ENCODE measurements at regions of chr1 and their contacts with region 1.

Region 1: DNA sequence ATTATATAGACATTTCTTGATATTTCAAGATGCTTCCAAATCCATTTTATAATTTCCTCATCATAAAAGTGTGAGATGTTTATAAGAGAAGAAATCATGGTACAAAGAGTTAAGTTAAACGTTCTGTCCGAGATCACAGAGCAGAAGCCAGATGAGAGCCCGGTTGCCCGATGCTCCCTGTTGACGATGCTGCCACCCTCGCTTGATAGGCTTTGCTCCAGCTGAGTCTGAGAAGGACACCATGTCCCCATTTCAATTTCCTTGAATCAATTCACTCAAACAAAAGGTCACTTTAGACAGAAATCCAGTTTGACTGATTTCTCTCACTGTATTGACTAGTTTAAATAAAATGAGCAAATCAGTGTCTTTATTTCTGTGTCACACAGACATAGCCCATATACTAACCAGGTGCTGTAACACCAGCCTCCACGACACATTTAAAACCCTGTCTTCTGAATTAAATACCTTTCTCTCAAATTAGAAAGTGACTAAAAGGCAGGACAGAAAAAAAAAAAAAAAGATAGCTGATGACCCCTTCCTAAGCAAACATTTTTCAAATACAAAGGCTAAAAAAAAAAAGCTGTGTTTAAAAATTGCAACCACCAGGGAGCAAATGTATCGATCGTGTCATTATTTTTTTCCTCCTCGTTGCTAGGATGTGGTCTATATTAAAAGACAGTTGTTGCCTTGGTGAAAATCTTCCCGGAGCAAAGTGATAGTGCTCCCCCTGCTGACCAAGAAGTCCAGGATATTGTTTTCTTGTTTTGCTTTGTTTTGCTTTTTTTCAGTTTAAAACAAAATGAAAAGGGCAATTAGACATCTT is 35.2 kb downstream of the DNASE2B start:
- DNase-seq: peak in 7 of 9 donors; percentile 71 to 85 (median 79)
- ATAC-seq: peak; percentile 92
- H3K4me3 ChIP-seq: peak overlapping the region; percentile 34
- H3K4me3 Mint-ChIP-seq: peak overlapping the region in 9 of 10 donors; percentile 29 to 82 (median 77)
- H3K27ac ChIP-seq: peak overlapping the region; percentile 73
- H3K27ac Mint-ChIP-seq: peak overlapping the region in 2 of 9 donors; percentile 85 to 90
- H3K4me1 ChIP-seq: peaks cover 23 to 41% of the 10 kb centered on the region in 2 donors
- H3K4me1 Mint-ChIP-seq: peaks cover 0 to 12% (median 9%) of the 10 kb centered on the region in 7 donors
- H3K27me3 ChIP-seq: no peaks in the 10 kb centered on the region
- H3K27me3 Mint-ChIP-seq: no peaks in the 10 kb centered on the region

Region 2: DNA sequence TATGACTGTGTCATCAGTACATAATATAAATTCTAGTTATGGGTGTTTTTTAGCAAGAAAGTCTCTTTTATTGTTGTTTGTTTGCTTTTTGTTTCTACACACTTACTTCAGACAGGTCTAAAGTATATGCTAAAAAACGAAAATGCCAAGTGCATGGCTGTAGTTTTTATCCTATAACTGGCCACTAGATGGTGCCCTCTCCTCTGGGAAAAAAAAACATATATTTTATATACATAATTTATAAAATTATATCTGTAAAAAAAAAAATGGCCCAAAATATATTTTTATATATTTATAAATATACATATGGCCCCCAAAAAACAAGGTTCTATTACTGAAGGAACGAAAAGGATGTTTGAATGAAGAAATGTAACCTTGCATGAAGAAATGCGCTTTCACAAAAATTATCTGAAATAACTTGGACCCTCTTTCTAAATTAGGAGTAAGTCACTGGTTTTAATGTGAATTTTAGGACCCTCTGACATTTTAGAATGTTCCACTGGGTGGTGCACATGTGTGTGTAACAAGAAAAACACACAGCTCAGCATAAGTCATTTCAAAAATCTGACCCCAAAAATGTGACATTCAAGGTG is 528.1 kb before region 1 on chr1:
- CTCF ChIA-PET with region 1: no interaction called
- POLR2A ChIA-PET with region 1: no interaction called
- intact Hi-C with region 1: loop called (anchors 1 to 2 kb)
- DNase-seq: peak in 5 of 9 donors; percentile 16 to 34 (median 25)
- ATAC-seq: peak; percentile 53
- H3K4me3 ChIP-seq: no peak overlapping the region
- H3K4me3 Mint-ChIP-seq: no peak overlapping the region
- H3K27ac ChIP-seq: no peak overlapping the region
- H3K27ac Mint-ChIP-seq: no peak overlapping the region
- H3K4me1 ChIP-seq: no peaks in the 10 kb centered on the region
- H3K4me1 Mint-ChIP-seq: no peaks in the 10 kb centered on the region
- H3K27me3 ChIP-seq: no peaks in the 10 kb centered on the region
- H3K27me3 Mint-ChIP-seq: peaks cover 9 to 23% (median 20%) of the 10 kb centered on the region in 5 donors

Region 3: DNA sequence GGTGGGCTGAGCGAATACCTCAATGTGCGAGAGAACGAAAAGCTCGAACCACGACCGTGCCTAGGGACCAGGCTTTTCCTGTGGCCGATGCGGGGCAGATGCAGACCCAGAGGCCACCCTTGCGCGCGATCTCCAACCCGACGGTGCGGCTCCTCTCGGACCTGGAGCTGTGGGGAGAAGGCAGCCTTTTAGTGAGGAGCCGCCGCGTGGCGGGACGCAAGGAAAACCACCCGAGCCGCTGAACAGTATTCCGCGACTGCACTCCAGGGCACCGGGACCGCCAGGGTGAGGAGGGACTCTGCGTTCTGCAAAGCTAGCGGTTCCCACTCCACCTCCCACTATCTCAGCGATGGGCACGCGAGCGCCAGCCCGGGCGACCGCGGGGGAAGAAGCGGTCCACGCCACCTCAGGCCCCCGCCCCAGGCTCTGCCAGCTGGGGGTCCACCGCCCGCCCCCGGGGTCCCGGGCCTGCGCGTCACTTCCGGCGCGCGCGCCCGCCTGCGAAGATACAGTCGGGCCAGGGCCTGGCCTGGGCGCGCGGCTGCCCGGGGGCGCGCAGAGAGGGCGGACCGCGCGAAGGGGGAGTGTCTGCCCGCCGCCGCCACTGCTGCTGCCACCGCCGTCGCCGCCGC is 355.9 kb before region 1 on chr1:
- CTCF ChIA-PET with region 1: no interaction called
- POLR2A ChIA-PET with region 1: no interaction called
- intact Hi-C with region 1: loop called (anchors 2 to 5 kb)
- DNase-seq: peak; percentile 64 to 79 (median 72)
- ATAC-seq: peak; percentile 97
- H3K4me3 ChIP-seq: peak overlapping the region; percentile 79
- H3K4me3 Mint-ChIP-seq: peak overlapping the region; percentile 84 to 93 (median 90)
- H3K27ac ChIP-seq: peak overlapping the region; percentile 66
- H3K27ac Mint-ChIP-seq: peak overlapping the region; percentile 23 to 87 (median 75)
- H3K4me1 ChIP-seq: peaks cover 9 to 10% of the 10 kb centered on the region in 2 donors
- H3K4me1 Mint-ChIP-seq: peaks cover 6 to 23% (median 14%) of the 10 kb centered on the region in 7 donors
- H3K27me3 ChIP-seq: no peaks in the 10 kb centered on the region
- H3K27me3 Mint-ChIP-seq: peaks cover 0 to 35% (median 0%) of the 10 kb centered on the region in 5 donors

Region 4: GRCh38 chr1:84344286-84344685 is 89.2 kb before region 1 on chr1:
- CTCF ChIA-PET with region 1: no interaction called
- POLR2A ChIA-PET with region 1: no interaction called
- intact Hi-C with region 1: no loop called
- DNase-seq: no peak
- ATAC-seq: no peak
- H3K4me3 ChIP-seq: no peak overlapping the region
- H3K4me3 Mint-ChIP-seq: no peak overlapping the region
- H3K27ac ChIP-seq: no peak overlapping the region
- H3K27ac Mint-ChIP-seq: no peak overlapping the region
- H3K4me1 ChIP-seq: no peaks in the 10 kb centered on the region
- H3K4me1 Mint-ChIP-seq: no peaks in the 10 kb centered on the region
- H3K27me3 ChIP-seq: no peaks in the 10 kb centered on the region
- H3K27me3 Mint-ChIP-seq: peaks cover 0 to 5% (median 4%) of the 10 kb centered on the region in 5 donors

Region 5: GRCh38 chr1:84506002-84506728 is 72.7 kb after region 1 on chr1 and contains the starts of genes GNG5 and SPATA1:
- CTCF ChIA-PET with region 1: interaction called, 3 read pairs
- POLR2A ChIA-PET with region 1: interaction called, 4 read pairs
- intact Hi-C with region 1: loop called in 1 of 2 experiments (anchors 1 kb)
- DNase-seq: peak; percentile 94 to 98 (median 96)
- ATAC-seq: peak; percentile 95
- H3K4me3 ChIP-seq: peak within 1 kb of the TSS; percentile 94
- H3K4me3 Mint-ChIP-seq: peak within 1 kb of the TSS; percentile 94 to 100 (median 98)
- H3K27ac ChIP-seq: peak within 1 kb of the TSS; percentile 76
- H3K27ac Mint-ChIP-seq: peak within 1 kb of the TSS; percentile 93 to 99 (median 96)
- H3K4me1 ChIP-seq: peaks cover 15 to 27% of the 10 kb centered on the region in 2 donors
- H3K4me1 Mint-ChIP-seq: peaks cover 18 to 54% (median 50%) of the 10 kb centered on the region in 7 donors
- H3K27me3 ChIP-seq: no peaks in the 10 kb centered on the region
- H3K27me3 Mint-ChIP-seq: peaks cover 0 to 2% (median 0%) of the 10 kb centered on the region in 5 donors
- total RNA-seq, gene GNG5: 24.8 to 90.7 (median 28.9) TPM
- total RNA-seq, gene SPATA1: 1.7 to 3.6 (median 2.2) TPM in 4 of 5 experiments, not detected in the other

Region 6: GRCh38 chr1:84853741-84854721 is 420.6 kb after region 1 on chr1:
- CTCF ChIA-PET with region 1: no interaction called
- POLR2A ChIA-PET with region 1: no interaction called
- intact Hi-C with region 1: loop called in 1 of 2 experiments (anchors 10 kb)
- DNase-seq: peak in 8 of 9 donors; percentile 16 to 56 (median 41)
- ATAC-seq: peak; percentile 96
- H3K4me3 ChIP-seq: no peak overlapping the region
- H3K4me3 Mint-ChIP-seq: peak overlapping the region in 6 of 10 donors; percentile 0 to 70 (median 14)
- H3K27ac ChIP-seq: peak overlapping the region; percentile 5
- H3K27ac Mint-ChIP-seq: peak overlapping the region; percentile 54 to 98 (median 87)
- H3K4me1 ChIP-seq: peaks cover 14 to 17% of the 10 kb centered on the region in 2 donors
- H3K4me1 Mint-ChIP-seq: peaks cover 23 to 52% (median 45%) of the 10 kb centered on the region in 7 donors
- H3K27me3 ChIP-seq: no peaks in the 10 kb centered on the region
- H3K27me3 Mint-ChIP-seq: peaks cover 0 to 8% (median 0%) of the 10 kb centered on the region in 5 donors

Region 7: GRCh38 chr1:86395771-86396497 is 1962.5 kb after region 1 on chr1 and contains the start of gene ODF2L:
- CTCF ChIA-PET with region 1: no interaction called
- POLR2A ChIA-PET with region 1: no interaction called
- intact Hi-C with region 1: loop called in 1 of 2 experiments (anchors 10 kb)
- DNase-seq: peak; percentile 73 to 92 (median 90)
- ATAC-seq: peak; percentile 100
- H3K4me3 ChIP-seq: peak within 1 kb of the TSS; percentile 80
- H3K4me3 Mint-ChIP-seq: peak within 1 kb of the TSS; percentile 90 to 100 (median 98)
- H3K27ac ChIP-seq: peak within 1 kb of the TSS; percentile 90
- H3K27ac Mint-ChIP-seq: peak within 1 kb of the TSS; percentile 94 to 99 (median 98)
- H3K4me1 ChIP-seq: peaks cover 17 to 20% of the 10 kb centered on the region in 2 donors
- H3K4me1 Mint-ChIP-seq: peaks cover 23 to 70% (median 58%) of the 10 kb centered on the region in 7 donors
- H3K27me3 ChIP-seq: no peaks in the 10 kb centered on the region
- H3K27me3 Mint-ChIP-seq: peaks cover 0 to 7% (median 0%) of the 10 kb centered on the region in 5 donors
- total RNA-seq, gene ODF2L: 50.3 to 75.3 (median 52.2) TPM

Measured in naive thymus-derived CD4-positive, alpha-beta T cell (primary cell).